ENCODE measurements at regions of chr6 and their contacts with region 1.

Region 1: DNA sequence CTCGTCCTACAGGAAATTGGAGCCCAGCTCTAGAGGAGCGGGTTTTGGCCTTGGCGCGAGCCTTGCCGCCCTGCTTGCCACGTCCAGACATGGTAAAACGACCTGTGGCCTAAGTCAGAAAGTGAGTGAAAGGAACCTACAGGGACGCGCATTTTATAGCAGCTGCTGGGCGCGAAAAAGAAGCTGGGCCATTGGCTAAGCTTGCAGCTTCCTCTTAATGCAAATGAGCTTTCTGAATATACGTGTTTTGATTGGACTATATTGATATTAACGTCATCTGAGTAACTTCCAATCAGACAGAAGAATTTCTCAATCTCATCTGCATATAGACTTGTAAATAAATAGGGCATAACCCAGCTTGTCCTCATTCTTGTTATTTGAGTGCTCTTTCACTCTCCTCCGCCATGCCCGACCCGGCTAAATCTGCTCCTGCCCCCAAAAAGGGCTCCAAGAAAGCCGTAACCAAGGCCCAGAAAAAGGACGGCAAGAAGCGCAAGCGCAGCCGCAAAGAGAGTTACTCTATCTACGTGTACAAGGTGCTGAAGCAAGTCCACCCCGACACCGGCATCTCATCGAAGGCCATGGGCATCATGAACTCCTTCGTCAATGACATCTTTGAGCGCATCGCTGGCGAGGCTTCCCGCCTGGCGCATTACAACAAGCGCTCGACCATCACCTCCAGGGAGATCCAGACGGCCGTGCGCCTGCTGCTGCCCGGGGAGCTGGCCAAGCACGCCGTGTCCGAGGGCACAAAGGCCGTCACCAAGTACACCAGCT is 18.9 kb downstream of the OR2B2 start:
- DNase-seq: peak; percentile 94
- H3K4me3 ChIP-seq: peak overlapping the region; percentile 91
- H3K27ac ChIP-seq: peak overlapping the region; percentile 91
- H3K27me3 ChIP-seq: no peaks in the 10 kb centered on the region
- CTCF ChIP-seq: no peak

Region 2: GRCh38 chr6:26196846-26197648 is 1696.2 kb before region 1 on chr6:
- CTCF ChIA-PET with region 1: no interaction called
- POLR2A ChIA-PET with region 1: interaction called, 10 read pairs
- DNase-seq: peak; percentile 86
- H3K4me3 ChIP-seq: peak overlapping the region; percentile 88
- H3K27ac ChIP-seq: peak overlapping the region; percentile 91
- H3K27me3 ChIP-seq: no peaks in the 10 kb centered on the region
- CTCF ChIP-seq: no peak

Region 3: DNA sequence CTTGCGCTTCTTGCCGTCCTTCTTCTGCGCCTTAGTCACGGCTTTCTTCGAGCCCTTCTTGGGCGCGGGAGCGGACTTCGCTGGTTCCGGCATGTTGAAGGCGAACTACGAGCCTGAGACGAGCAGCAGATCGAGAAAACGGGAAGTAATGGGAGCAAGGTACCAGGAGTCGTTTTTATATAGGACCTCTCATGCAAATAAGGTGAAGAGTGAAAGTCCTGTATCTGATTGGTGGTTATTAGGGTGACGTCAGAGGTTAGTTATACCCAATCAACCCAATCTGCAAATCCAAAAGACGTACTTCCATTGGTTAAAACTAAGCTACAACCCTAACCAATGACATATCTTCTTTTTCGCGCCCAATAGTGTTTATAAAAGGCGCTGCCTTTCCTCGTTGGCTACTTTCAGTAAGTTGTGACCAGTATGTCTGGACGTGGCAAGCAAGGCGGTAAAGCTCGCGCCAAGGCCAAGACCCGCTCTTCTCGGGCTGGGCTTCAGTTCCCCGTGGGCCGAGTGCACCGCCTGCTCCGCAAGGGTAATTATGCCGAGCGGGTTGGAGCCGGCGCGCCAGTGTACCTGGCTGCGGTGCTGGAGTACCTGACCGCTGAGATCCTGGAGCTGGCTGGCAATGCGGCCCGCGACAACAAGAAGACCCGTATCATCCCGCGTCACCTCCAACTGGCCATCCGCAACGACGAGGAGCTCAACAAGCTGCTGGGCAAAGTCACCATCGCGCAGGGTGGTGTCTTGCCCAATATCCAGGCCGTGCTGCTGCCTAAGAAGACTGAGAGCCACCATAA is 746.3 kb before region 1 on chr6:
- CTCF ChIA-PET with region 1: interaction called, 7 read pairs
- POLR2A ChIA-PET with region 1: interaction called, 59 read pairs
- DNase-seq: peak; percentile 99
- H3K4me3 ChIP-seq: peak overlapping the region; percentile 73
- H3K27ac ChIP-seq: peak overlapping the region; percentile 98
- H3K27me3 ChIP-seq: no peaks in the 10 kb centered on the region
- CTCF ChIP-seq: no peak

Region 4: GRCh38 chr6:27753668-27754407 is 139.4 kb before region 1 on chr6:
- CTCF ChIA-PET with region 1: interaction called, 11 read pairs
- POLR2A ChIA-PET with region 1: interaction called, 8 read pairs
- DNase-seq: peak; percentile 61
- H3K4me3 ChIP-seq: peak overlapping the region; percentile 61
- H3K27ac ChIP-seq: no peak overlapping the region
- H3K27me3 ChIP-seq: peaks cover 13% of the 10 kb centered on the region
- CTCF ChIP-seq: peak; percentile 26; the same call in 1 of the 2 replicates

Region 5: DNA sequence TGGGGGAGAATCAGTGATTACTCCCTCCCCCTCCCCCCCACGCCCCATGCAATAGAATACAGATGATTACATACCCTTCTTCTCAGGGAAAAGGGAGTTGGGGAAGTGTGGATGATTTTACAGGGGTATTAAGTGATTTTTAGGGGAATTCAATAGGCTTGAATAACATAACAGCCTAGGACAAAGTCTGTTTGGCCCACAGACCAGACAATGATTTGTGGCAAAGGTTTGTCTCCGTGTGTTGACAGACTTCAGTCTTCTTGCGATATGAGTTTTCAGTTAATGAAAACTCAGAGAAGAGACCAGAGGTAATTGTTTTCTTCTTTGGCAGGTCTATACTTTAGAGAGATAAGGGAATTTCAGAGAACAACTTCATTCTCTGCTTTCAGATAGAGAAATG is 76.3 kb before region 1 on chr6:
- CTCF ChIA-PET with region 1: interaction called, 90 read pairs
- POLR2A ChIA-PET with region 1: interaction called, 167 read pairs
- DNase-seq: no peak
- H3K4me3 ChIP-seq: no peak overlapping the region
- H3K27ac ChIP-seq: no peak overlapping the region
- H3K27me3 ChIP-seq: no peaks in the 10 kb centered on the region
- CTCF ChIP-seq: no peak

Region 6: GRCh38 chr6:27871924-27872638 is 21.2 kb before region 1 on chr6:
- CTCF ChIA-PET with region 1: interaction called, 20 read pairs
- POLR2A ChIA-PET with region 1: interaction called, 149 read pairs
- DNase-seq: peak; percentile 96
- H3K4me3 ChIP-seq: peak overlapping the region; percentile 69
- H3K27ac ChIP-seq: peak overlapping the region; percentile 94
- H3K27me3 ChIP-seq: no peaks in the 10 kb centered on the region
- CTCF ChIP-seq: peak; percentile 40; the same call in 1 of the 2 replicates

Region 7: GRCh38 chr6:27986928-27987725 is 93.9 kb after region 1 on chr6:
- CTCF ChIA-PET with region 1: no interaction called
- POLR2A ChIA-PET with region 1: no interaction called
- DNase-seq: no peak
- H3K4me3 ChIP-seq: no peak overlapping the region
- H3K27ac ChIP-seq: no peak overlapping the region
- H3K27me3 ChIP-seq: no peaks in the 10 kb centered on the region
- CTCF ChIP-seq: no peak